ENCODE measurements at regions of chr2 and their contacts with region 1.

Region 1: DNA sequence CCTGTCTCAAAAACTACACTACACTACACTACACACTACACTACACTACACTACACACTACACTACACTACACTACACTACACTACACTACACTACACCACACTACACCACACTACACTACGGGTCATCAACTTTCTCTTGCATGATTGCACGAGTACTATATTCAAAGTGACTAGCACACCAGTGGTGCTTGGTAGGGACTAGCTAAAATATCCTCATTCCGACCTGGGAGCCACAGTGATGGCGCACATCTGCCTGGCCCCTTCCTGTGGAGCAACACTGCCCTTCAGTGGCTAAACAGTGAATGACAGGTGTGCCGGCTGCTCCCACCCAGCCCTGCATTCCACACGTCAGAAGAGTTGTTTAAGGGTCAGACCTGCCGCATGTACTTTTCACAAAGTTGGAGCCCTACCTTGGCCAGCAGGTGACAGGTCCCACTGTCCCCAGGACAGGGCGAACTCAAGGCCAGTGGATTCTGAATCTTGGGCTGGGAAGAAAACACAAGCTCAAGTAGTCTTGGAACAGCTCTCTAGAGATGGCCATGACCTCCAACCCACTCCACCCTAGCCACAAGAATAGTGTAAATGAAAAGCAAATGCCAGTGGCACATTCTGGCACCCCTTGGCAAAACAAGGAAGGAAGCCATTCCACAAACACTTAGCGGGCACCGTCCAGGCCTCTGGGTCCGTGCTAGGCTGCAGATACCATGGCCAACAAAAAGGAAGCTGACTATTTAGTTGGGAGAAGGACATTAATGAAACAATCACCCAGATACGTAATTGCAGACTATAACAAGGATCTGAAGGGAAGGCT is 79.7 kb upstream of the MSH2 start:
- DNase-seq: peak; percentile 87
- ATAC-seq: peak; percentile 98
- H3K4me3 ChIP-seq: no peak overlapping the region
- H3K27ac ChIP-seq: no peak overlapping the region
- H3K4me1 ChIP-seq: peaks cover 10% of the 10 kb centered on the region
- H3K27me3 ChIP-seq: no peaks in the 10 kb centered on the region
- CTCF ChIP-seq: peak; percentile 96

Region 2: DNA sequence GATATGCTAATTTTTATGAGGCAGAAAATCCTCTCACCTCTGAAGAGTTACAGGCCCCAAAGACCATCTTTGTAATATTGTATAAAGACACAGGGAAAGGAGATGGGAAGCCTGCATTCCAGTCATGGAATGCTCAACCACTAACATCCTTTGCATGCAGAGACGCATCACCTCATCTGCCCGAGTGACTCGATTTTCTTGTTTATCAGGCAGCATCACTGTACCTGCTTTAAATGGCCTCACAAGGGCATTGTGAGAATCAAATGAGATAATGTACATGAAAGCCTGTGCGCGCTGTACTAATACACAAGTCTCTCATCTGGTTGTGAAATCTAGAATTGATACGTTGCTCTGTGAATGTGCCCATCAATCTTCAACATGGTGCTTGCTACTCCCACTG is 854.1 kb before region 1 on chr2:
- CTCF ChIA-PET with region 1: no interaction called
- POLR2A ChIA-PET with region 1: no interaction called
- intact Hi-C with region 1: loop called (anchors 5 kb)
- DNase-seq: peak; percentile 23
- ATAC-seq: no peak
- H3K4me3 ChIP-seq: no peak overlapping the region
- H3K27ac ChIP-seq: no peak overlapping the region
- H3K4me1 ChIP-seq: no peaks in the 10 kb centered on the region
- H3K27me3 ChIP-seq: no peaks in the 10 kb centered on the region
- CTCF ChIP-seq: no peak

Region 3: GRCh38 chr2:46915811-46916630 is 407.2 kb before region 1 on chr2:
- CTCF ChIA-PET with region 1: no interaction called
- POLR2A ChIA-PET with region 1: no interaction called
- intact Hi-C with region 1: loop called (anchors 2 kb)
- DNase-seq: peak; percentile 92
- ATAC-seq: peak; percentile 77
- H3K4me3 ChIP-seq: peak overlapping the region; percentile 79
- H3K27ac ChIP-seq: peak overlapping the region; percentile 79
- H3K4me1 ChIP-seq: peaks cover 39% of the 10 kb centered on the region
- H3K27me3 ChIP-seq: no peaks in the 10 kb centered on the region
- CTCF ChIP-seq: no peak

Region 4: DNA sequence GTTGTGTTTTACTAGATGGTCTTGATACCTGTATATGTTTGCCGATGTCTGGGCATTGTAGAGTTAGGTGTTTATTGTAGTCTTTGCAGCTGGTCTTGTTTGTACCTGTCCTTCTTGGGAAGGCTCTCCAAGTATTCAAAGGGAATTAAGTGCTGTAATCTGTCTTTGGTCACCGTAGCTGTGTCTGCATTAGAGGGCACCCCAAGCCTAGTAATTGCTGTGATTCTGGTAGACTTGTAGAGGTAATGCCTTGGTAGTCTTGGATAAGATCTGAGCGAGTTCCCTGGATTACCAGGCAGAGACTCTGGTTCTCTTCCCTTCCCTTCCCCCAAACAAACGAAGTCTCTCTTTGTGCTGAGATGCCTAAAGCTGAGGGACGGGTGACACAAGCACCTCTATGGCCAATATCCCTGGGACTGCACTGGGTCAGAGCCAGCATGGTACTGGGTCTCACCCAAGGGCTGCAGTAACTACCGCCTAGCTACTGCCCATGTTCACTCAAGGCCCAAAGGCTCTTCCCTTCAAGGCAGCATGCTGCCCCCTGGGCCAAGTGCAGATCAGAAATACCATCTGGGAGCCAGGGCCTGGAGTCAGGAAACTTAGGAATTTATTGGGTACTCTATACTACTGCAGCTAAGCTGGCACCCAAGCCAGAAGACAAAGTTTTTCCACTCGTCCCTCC is 195.2 kb before region 1 on chr2:
- CTCF ChIA-PET with region 1: no interaction called
- POLR2A ChIA-PET with region 1: no interaction called
- intact Hi-C with region 1: loop called (anchors 5 kb)
- DNase-seq: no peak
- ATAC-seq: no peak; the same call in 1 of the 2 replicates
- H3K4me3 ChIP-seq: no peak overlapping the region
- H3K27ac ChIP-seq: no peak overlapping the region
- H3K4me1 ChIP-seq: no peaks in the 10 kb centered on the region
- H3K27me3 ChIP-seq: no peaks in the 10 kb centered on the region
- CTCF ChIP-seq: peak; percentile 20; the same call in 1 of the 2 replicates

Region 5: GRCh38 chr2:47272031-47272864 is 51.0 kb before region 1 on chr2:
- CTCF ChIA-PET with region 1: no interaction called
- POLR2A ChIA-PET with region 1: no interaction called
- intact Hi-C with region 1: loop called (anchors 5 kb)
- DNase-seq: peak; percentile 70
- ATAC-seq: peak; percentile 62
- H3K4me3 ChIP-seq: peak overlapping the region; percentile 63
- H3K27ac ChIP-seq: peak overlapping the region; percentile 87
- H3K4me1 ChIP-seq: peaks cover 47% of the 10 kb centered on the region
- H3K27me3 ChIP-seq: no peaks in the 10 kb centered on the region
- CTCF ChIP-seq: peak; percentile 96

Region 6: GRCh38 chr2:47360927-47361326 is 37.7 kb after region 1 on chr2:
- CTCF ChIA-PET with region 1: no interaction called
- POLR2A ChIA-PET with region 1: no interaction called
- intact Hi-C with region 1: no loop called
- DNase-seq: peak; percentile 96
- ATAC-seq: peak; percentile 99
- H3K4me3 ChIP-seq: no peak overlapping the region
- H3K27ac ChIP-seq: peak overlapping the region; percentile 73
- H3K4me1 ChIP-seq: peaks cover 19% of the 10 kb centered on the region
- H3K27me3 ChIP-seq: no peaks in the 10 kb centered on the region
- CTCF ChIP-seq: no peak

Measured in PC-3 (cell line).